RWPE1 (cell line): ENCODE measurements at regions of chr9 and their contacts with region 1.

Region 1: GRCh38 chr9:133144137-133144903 is 19.4 kb downstream of the GBGT1 start:
- DNase-seq: peak; percentile 91
- H3K27ac ChIP-seq: peak overlapping the region; percentile 94
- CTCF ChIP-seq: peak; percentile 100

Region 2: GRCh38 chr9:133030317-133031129 is 113.8 kb before region 1 on chr9 and contains the start of gene GTF3C5:
- CTCF ChIA-PET with region 1: interaction called, 12 read pairs
- POLR2A ChIA-PET with region 1: interaction called, 4 read pairs
- DNase-seq: peak; percentile 100
- H3K27ac ChIP-seq: peak within 1 kb of the TSS; percentile 87
- CTCF ChIP-seq: no peak

Region 3: DNA sequence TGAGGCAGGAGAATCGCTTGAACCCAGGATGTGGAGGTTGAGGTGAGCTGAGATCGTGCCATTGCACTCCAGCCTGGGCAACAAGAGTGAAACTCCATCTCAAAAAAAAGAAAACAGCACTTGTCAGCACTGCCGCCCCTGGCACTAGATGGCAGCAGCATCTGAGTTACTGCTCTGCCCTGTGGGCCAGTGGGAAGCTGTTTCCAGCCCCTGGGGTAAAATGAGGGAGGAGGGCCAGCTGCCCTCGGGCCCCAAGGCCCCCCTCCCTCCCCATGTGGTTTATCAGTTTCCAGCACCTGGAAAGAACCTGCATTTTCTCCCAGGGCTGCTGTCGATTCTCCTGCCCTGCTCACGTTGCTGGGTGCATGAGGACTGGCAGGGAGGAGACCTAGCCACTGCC is 95.8 kb before region 1 on chr9:
- CTCF ChIA-PET with region 1: interaction called, 16 read pairs
- POLR2A ChIA-PET with region 1: interaction called, 3 read pairs
- DNase-seq: peak; percentile 64
- H3K27ac ChIP-seq: peak overlapping the region; percentile 43
- CTCF ChIP-seq: peak; percentile 72

Region 4: GRCh38 chr9:133103183-133103986 is 40.9 kb before region 1 on chr9:
- CTCF ChIA-PET with region 1: interaction called, 71 read pairs
- POLR2A ChIA-PET with region 1: no interaction called
- DNase-seq: peak; percentile 67
- H3K27ac ChIP-seq: peak overlapping the region; percentile 51
- CTCF ChIP-seq: peak; percentile 100

Region 5: DNA sequence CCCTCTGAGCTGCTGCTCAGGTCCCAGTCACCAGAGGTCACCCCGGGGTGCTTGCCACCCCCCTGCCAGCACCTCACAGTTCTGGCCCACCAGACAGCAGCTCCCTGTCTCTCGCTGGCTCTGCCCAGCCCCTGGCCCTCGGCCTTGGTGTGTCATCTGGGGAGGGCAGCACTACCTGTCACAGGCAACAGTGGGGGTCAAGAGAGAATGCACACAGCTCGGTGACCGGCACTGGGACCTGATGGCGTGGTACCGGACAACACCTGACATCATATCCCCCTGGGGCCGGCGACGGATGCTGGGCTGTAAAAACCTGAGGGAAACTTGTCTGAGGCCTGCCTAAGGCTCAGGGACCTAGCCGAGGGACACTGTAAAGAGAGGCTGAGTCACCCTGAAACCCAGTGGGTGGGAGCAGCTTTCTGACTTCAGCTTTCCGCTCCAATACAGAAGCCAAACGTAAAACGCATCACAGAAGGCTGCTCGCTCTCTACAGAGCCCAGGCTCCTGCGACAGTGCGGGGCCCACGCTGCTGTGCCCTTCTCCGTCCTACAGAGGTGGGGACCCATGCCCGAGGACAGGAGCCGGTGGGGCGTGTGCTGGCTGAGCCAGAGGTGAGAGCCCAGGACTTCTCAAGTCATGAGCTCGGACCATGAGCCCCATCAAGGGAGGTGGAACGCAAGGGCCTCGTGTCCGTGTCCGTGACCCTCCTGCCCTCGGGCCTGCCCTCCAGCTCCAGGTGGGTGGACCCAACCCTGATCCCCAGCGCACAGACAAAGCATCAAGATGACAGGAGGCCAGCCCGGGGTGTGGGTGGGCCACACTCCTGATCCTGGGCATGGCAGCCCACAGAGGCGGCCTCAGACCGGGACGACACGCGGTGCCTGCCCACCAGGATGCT is 28.6 kb before region 1 on chr9:
- CTCF ChIA-PET with region 1: interaction called, 58 read pairs
- POLR2A ChIA-PET with region 1: interaction called, 5 read pairs
- DNase-seq: no peak
- H3K27ac ChIP-seq: peak overlapping the region; percentile 93
- CTCF ChIP-seq: no peak

Region 6: DNA sequence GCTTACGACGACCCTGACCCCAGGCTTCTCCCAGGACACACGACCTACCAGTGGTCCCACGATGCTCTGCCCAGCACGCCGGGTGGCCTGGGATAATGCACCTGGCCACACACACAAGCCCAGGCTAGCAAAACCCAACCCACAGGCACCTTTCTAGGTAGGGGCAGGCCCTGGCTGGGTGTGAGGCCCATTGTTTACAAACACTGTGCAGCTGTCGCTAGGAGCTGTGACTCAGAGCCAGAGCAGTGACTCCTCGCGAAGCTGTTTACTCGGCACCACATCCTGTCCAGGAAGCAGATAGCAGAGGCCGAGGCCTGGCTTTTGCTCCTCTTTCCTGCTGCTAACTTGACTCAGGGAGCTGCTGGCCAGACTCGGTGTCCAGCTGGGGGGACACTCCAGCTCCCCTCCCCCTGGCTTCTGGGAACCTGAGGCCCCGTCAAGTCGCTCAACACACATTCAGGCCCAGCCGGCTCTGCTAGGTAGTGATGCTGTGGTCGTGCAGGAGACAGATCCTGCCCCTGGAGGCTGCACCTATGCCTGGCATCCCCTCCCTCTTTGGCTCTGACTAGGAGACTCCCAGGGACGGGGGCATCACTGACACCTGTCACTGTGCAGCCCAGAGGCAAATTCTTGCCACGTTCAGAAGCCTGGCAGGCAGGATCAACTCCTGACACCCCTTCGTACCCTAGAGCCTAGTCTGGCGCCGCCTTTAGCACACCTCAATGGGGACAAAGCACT is 10.5 kb before region 1 on chr9:
- CTCF ChIA-PET with region 1: interaction called, 47 read pairs
- POLR2A ChIA-PET with region 1: interaction called, 6 read pairs
- DNase-seq: peak; percentile 99
- H3K27ac ChIP-seq: peak overlapping the region; percentile 95
- CTCF ChIP-seq: no peak